Keratinocyte (primary cell): ENCODE measurements at regions of chr3 and their contacts with region 1.

Region 1: GRCh38 chr3:116741467-116741866 is 31.9 kb downstream of the TUSC7 start:
- DNase-seq: no peak
- H3K4me3 ChIP-seq: no peak overlapping the region
- H3K27ac ChIP-seq: no peak overlapping the region
- H3K4me1 ChIP-seq: no peaks in the 10 kb centered on the region
- H3K27me3 ChIP-seq: no peaks in the 10 kb centered on the region
- CTCF ChIP-seq: no peak

Region 2: DNA sequence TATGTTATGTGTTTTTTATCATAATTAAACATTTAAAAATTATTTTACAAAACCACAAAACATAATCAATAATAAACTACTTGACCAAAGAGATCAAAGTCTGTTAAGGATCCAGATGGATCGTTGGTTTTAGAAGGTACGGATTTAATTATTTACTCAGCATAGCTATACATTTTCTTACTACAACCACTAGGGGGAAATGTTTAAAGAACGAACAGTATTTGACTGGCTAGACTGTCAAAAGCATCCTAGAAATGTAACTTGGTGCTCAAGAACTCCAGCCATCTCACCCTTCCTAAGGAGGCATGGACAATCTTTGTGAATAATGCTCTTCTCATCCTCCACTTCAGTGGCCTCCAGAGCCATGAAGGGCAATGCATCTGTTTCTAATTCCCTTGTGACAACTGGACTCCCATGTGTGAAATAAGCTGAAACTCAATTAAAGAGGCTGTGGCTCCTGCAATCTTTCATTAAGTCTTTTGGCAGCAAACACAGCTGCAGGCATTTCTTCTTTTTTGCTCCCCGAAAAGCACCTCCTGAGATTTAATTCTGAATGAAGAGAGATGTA is 126.6 kb before region 1 on chr3:
- dilution Hi-C with region 1: loop called (anchors 25 kb)
- DNase-seq: no peak
- H3K4me3 ChIP-seq: no peak overlapping the region
- H3K27ac ChIP-seq: no peak overlapping the region
- H3K4me1 ChIP-seq: peaks cover 4% of the 10 kb centered on the region
- H3K27me3 ChIP-seq: no peaks in the 10 kb centered on the region
- CTCF ChIP-seq: peak in 2 of 3 experiments; percentile 11 to 28

Region 3: GRCh38 chr3:116647960-116648359 is 93.5 kb before region 1 on chr3:
- dilution Hi-C with region 1: no loop called
- DNase-seq: no peak
- H3K4me3 ChIP-seq: no peak overlapping the region
- H3K27ac ChIP-seq: no peak overlapping the region
- H3K4me1 ChIP-seq: peaks cover 6% of the 10 kb centered on the region
- H3K27me3 ChIP-seq: no peaks in the 10 kb centered on the region
- CTCF ChIP-seq: no peak